ENCODE measurements at regions of chr4 and their contacts with region 1.

Region 1: GRCh38 chr4:85084380-85085094 is 118.0 kb upstream of the WDFY3 start:
- DNase-seq: peak in 2 of 9 experiments; percentile 22 to 37
- ATAC-seq: no peak
- H3K4me3 ChIP-seq: no peak overlapping the region
- H3K4me3 Mint-ChIP-seq: no peak overlapping the region
- H3K27ac ChIP-seq: no peak overlapping the region
- H3K27ac Mint-ChIP-seq: no peak overlapping the region
- H3K4me1 ChIP-seq: no peaks in the 10 kb centered on the region
- H3K4me1 Mint-ChIP-seq: no peaks in the 10 kb centered on the region
- H3K27me3 ChIP-seq: no peaks in the 10 kb centered on the region
- H3K27me3 Mint-ChIP-seq: no peaks in the 10 kb centered on the region
- CTCF ChIP-seq: peak; percentile 64

Region 2: GRCh38 chr4:84977396-84977795 is 107.1 kb before region 1 on chr4:
- CTCF ChIA-PET with region 1: no interaction called
- POLR2A ChIA-PET with region 1: no interaction called
- intact Hi-C with region 1: no loop called
- DNase-seq: no peak
- ATAC-seq: no peak
- H3K4me3 ChIP-seq: no peak overlapping the region
- H3K4me3 Mint-ChIP-seq: no peak overlapping the region
- H3K27ac ChIP-seq: no peak overlapping the region
- H3K27ac Mint-ChIP-seq: no peak overlapping the region
- H3K4me1 ChIP-seq: no peaks in the 10 kb centered on the region
- H3K4me1 Mint-ChIP-seq: no peaks in the 10 kb centered on the region
- H3K27me3 ChIP-seq: no peaks in the 10 kb centered on the region
- H3K27me3 Mint-ChIP-seq: peaks cover 11% of the 10 kb centered on the region
- CTCF ChIP-seq: no peak

Region 3: DNA sequence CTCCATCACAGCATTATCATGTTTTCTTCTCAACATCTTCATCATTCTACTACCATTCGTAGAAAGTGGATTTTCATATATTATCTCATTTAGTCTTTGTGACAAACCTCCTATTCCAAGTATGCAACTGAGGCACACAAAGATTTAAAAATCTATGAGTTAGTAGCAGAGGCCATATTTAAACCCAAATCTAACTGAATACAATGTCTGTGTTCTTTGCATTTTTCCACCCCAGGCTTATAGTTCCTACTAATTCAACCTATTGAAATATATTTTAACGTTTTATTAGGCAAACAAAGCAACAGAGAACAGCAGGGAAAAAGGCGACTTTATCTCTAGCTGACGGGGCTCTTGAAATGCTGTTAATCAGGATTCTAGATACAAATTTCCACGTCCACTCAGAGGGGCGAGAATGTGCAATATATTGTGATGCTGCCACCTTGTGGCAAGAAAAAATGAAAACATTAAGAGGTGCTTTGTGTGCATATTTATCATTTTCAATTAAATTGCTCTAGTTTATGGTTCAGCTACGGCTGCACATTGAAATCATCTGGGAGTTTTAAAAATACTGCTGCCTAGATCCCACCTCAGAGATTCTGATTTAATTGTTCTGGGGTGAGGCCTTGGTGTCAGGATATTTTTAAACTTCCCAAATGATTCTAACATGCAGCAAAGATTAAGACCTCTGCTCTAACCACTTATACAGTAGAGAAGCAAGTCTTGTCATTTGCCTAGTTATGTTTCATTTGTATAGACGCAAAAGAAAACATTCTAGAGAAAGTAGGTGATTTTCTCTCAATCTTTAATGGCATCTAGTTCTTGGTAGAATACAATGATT is 959.4 kb after region 1 on chr4:
- CTCF ChIA-PET with region 1: no interaction called
- POLR2A ChIA-PET with region 1: no interaction called
- intact Hi-C with region 1: loop called (anchors 5 kb)
- DNase-seq: peak in 2 of 9 experiments; percentile 7 to 24
- ATAC-seq: no peak
- H3K4me3 ChIP-seq: no peak overlapping the region
- H3K4me3 Mint-ChIP-seq: no peak overlapping the region
- H3K27ac ChIP-seq: no peak overlapping the region
- H3K27ac Mint-ChIP-seq: no peak overlapping the region
- H3K4me1 ChIP-seq: no peaks in the 10 kb centered on the region
- H3K4me1 Mint-ChIP-seq: no peaks in the 10 kb centered on the region
- H3K27me3 ChIP-seq: no peaks in the 10 kb centered on the region
- H3K27me3 Mint-ChIP-seq: no peaks in the 10 kb centered on the region
- CTCF ChIP-seq: peak; percentile 59

Region 4: GRCh38 chr4:86895692-86896488 is 1811.4 kb after region 1 on chr4:
- CTCF ChIA-PET with region 1: no interaction called
- POLR2A ChIA-PET with region 1: no interaction called
- intact Hi-C with region 1: loop called in 1 of 2 experiments (anchors 5 kb)
- DNase-seq: peak in 3 of 9 experiments; percentile 7 to 59 (median 49)
- ATAC-seq: peak; percentile 56
- H3K4me3 ChIP-seq: no peak overlapping the region
- H3K4me3 Mint-ChIP-seq: no peak overlapping the region
- H3K27ac ChIP-seq: no peak overlapping the region
- H3K27ac Mint-ChIP-seq: no peak overlapping the region
- H3K4me1 ChIP-seq: peaks cover 3% of the 10 kb centered on the region
- H3K4me1 Mint-ChIP-seq: peaks cover 12% of the 10 kb centered on the region
- H3K27me3 ChIP-seq: peaks cover 5 to 9% of the 10 kb centered on the region in 2 experiments
- H3K27me3 Mint-ChIP-seq: peaks cover 17% of the 10 kb centered on the region
- CTCF ChIP-seq: peak; percentile 74

Measured in CD8-positive, alpha-beta T cell (primary cell).